ENCODE measurements at regions of chr12 and their contacts with region 1.

Region 1: GRCh38 chr12:95998611-95999286 is 2.6 kb upstream of the HAL start:
- DNase-seq: peak; percentile 55 to 58
- H3K4me3 ChIP-seq: no peak overlapping the region
- H3K4me3 Mint-ChIP-seq: no peak overlapping the region
- H3K27ac Mint-ChIP-seq: no peak overlapping the region
- H3K4me1 ChIP-seq: no peaks in the 10 kb centered on the region; the same call in 1 of the 2 replicates
- H3K4me1 Mint-ChIP-seq: peaks cover 20% of the 10 kb centered on the region
- H3K27me3 ChIP-seq: no peaks in the 10 kb centered on the region
- H3K27me3 Mint-ChIP-seq: no peaks in the 10 kb centered on the region
- CTCF ChIP-seq: peak; percentile 64 to 67

Region 2: GRCh38 chr12:95700316-95700785 is 298.4 kb before region 1 on chr12:
- CTCF ChIA-PET with region 1: no interaction called
- POLR2A ChIA-PET with region 1: no interaction called
- intact Hi-C with region 1: no loop called
- DNase-seq: no peak
- H3K4me3 ChIP-seq: no peak overlapping the region
- H3K4me3 Mint-ChIP-seq: no peak overlapping the region
- H3K27ac Mint-ChIP-seq: no peak overlapping the region
- H3K4me1 ChIP-seq: no peaks in the 10 kb centered on the region
- H3K4me1 Mint-ChIP-seq: no peaks in the 10 kb centered on the region
- H3K27me3 ChIP-seq: no peaks in the 10 kb centered on the region
- H3K27me3 Mint-ChIP-seq: no peaks in the 10 kb centered on the region
- CTCF ChIP-seq: no peak

Region 3: DNA sequence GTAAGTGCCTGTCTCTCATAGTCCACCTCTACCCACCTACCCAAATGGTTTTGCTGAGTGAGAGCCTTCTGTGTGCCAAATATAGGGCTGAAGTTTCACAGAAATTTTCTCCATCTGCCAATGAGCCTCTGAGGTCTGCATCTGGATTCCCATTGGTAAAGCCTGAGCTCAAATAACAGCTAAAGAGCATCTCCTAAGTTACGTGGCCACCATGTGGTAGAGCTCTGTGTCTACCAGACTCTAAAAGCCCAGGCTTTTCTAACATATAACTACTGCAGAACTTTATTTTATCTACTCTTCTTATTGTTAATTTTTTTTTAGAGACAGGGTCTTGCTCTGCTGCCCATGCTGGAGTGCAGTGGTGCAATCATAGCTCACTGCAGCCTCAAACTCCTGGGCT is 39.6 kb before region 1 on chr12:
- CTCF ChIA-PET with region 1: interaction called, 9 read pairs
- POLR2A ChIA-PET with region 1: no interaction called
- intact Hi-C with region 1: loop called (anchors 1 kb)
- DNase-seq: peak in 1 of 2 experiments; percentile 28
- H3K4me3 ChIP-seq: no peak overlapping the region
- H3K4me3 Mint-ChIP-seq: no peak overlapping the region
- H3K27ac Mint-ChIP-seq: no peak overlapping the region
- H3K4me1 ChIP-seq: no peaks in the 10 kb centered on the region
- H3K4me1 Mint-ChIP-seq: no peaks in the 10 kb centered on the region
- H3K27me3 ChIP-seq: no peaks in the 10 kb centered on the region
- H3K27me3 Mint-ChIP-seq: peaks cover 5% of the 10 kb centered on the region
- CTCF ChIP-seq: peak; percentile 15 to 33

Region 4: DNA sequence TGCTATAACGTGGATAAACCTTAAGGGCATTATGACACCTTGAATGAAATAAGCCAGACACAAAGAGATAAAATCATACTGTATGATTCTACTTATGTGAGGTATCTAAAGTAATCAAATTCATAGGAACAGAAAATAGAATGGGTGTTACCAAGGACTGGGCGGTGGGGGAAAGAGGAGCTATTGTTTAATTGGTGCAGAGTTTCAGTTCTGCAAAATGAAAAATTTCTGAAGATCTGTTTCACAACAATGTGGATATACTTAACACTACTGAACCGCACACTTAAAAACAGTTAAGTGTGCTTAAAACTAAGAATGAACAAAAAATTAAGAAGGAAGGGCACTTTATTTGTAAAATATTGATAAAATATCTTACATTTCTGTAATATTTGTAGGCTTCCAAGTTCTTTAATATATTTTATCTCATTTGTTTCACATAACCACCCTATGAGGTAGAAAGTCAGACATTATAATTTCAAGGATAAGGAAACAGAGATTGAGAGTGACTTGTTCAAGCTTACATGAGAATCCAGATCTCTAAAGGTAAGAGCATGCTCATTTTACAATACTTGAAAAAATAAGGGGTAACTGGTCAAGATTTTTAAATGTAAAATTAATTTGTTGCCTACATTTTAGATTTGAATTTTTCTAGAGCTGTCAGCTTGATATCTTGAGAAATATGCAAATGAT is 21.7 kb after region 1 on chr12:
- CTCF ChIA-PET with region 1: no interaction called
- POLR2A ChIA-PET with region 1: no interaction called
- intact Hi-C with region 1: no loop called
- DNase-seq: no peak
- H3K4me3 ChIP-seq: no peak overlapping the region
- H3K4me3 Mint-ChIP-seq: no peak overlapping the region
- H3K27ac Mint-ChIP-seq: no peak overlapping the region
- H3K4me1 ChIP-seq: no peaks in the 10 kb centered on the region
- H3K4me1 Mint-ChIP-seq: no peaks in the 10 kb centered on the region
- H3K27me3 ChIP-seq: no peaks in the 10 kb centered on the region
- H3K27me3 Mint-ChIP-seq: no peaks in the 10 kb centered on the region
- CTCF ChIP-seq: no peak

Measured in Caco-2 (cell line).